ENCODE measurements at regions of chr12 and their contacts with region 1.

Region 1: DNA sequence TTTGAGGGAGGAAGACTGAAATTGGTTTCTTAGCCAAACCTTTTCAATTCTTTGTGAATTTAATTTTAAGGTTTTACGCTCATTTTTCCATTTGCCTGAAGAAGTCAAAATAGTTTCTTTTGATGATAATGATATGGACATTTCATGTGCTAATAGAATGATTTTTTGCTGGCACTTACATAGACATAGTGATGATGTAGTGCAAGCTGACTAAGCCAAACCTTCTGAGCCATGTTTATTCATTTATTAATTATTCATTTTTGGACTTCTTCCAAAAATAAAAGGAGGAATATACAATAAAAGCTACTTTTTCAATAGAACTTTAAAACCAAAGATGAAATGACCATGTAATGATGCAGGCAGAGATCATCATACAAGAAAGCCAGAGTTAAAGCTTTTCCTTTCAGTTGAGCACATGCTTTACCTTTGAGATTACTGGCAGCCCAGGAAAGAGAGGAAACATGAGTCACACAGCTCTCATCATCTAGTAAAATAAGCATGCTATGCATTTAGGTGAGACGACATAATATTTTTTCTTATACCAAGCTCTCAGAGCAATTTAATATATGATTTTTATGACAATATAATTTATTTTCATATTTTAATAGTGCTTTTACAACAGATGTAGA is 24.8 kb downstream of the KCNA1 start:
- DNase-seq: no peak
- CTCF ChIP-seq: no peak

Region 2: GRCh38 chr12:4918950-4919660 is 15.4 kb before region 1 on chr12:
- CTCF ChIA-PET with region 1: interaction called, 17 read pairs
- POLR2A ChIA-PET with region 1: no interaction called
- DNase-seq: no peak
- CTCF ChIP-seq: no peak

Measured in GM10248 (cell line).